ENCODE measurements at regions of chr4 and their contacts with region 1.

Region 1: GRCh38 chr4:10157478-10158332 is 41.1 kb upstream of the WDR1 start:
- DNase-seq: peak; percentile 55 to 66 (median 65)
- ATAC-seq: peak; percentile 70
- H3K4me3 ChIP-seq: no peak overlapping the region
- H3K27ac ChIP-seq: no peak overlapping the region
- H3K4me1 ChIP-seq: peaks cover 9% of the 10 kb centered on the region
- H3K27me3 ChIP-seq: no peaks in the 10 kb centered on the region
- CTCF ChIP-seq: peak; percentile 57 to 86 (median 82)
- POLR2A ChIP-seq: no peak

Region 2: GRCh38 chr4:10395971-10396580 is 238.4 kb after region 1 on chr4:
- intact Hi-C with region 1: loop called (anchors 5 kb)
- DNase-seq: no peak
- ATAC-seq: no peak
- H3K4me3 ChIP-seq: no peak overlapping the region
- H3K27ac ChIP-seq: no peak overlapping the region
- H3K4me1 ChIP-seq: no peaks in the 10 kb centered on the region
- H3K27me3 ChIP-seq: no peaks in the 10 kb centered on the region
- CTCF ChIP-seq: no peak
- POLR2A ChIP-seq: no peak

Region 3: DNA sequence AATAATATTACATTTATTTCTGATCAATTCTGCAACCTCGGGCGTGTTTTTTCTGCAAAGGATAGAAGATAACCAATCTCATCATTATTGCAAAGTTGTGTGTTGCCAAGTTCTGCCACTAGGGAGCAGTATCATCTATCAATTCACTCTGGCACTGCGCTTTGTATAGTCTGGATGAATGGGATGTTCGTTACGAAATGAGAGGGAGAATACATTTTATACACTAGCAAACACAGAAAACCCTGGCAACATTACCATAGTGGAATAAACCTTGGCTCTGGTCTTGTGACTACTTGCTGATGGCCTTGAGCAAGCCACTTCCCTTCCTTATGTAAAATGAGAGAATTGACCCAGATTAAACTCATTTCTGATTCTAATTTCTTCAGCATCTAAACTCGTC is 397.0 kb after region 1 on chr4:
- intact Hi-C with region 1: loop called (anchors 10 kb)
- DNase-seq: peak; percentile 45 to 56 (median 51)
- ATAC-seq: peak; percentile 71
- H3K4me3 ChIP-seq: no peak overlapping the region
- H3K27ac ChIP-seq: no peak overlapping the region
- H3K4me1 ChIP-seq: no peaks in the 10 kb centered on the region
- H3K27me3 ChIP-seq: no peaks in the 10 kb centered on the region
- CTCF ChIP-seq: peak; percentile 42 to 75 (median 72)
- POLR2A ChIP-seq: no peak